Thyroid gland (tissue), 4 donors: ENCODE measurements at regions of chr10 and their contacts with region 1.

Region 1: DNA sequence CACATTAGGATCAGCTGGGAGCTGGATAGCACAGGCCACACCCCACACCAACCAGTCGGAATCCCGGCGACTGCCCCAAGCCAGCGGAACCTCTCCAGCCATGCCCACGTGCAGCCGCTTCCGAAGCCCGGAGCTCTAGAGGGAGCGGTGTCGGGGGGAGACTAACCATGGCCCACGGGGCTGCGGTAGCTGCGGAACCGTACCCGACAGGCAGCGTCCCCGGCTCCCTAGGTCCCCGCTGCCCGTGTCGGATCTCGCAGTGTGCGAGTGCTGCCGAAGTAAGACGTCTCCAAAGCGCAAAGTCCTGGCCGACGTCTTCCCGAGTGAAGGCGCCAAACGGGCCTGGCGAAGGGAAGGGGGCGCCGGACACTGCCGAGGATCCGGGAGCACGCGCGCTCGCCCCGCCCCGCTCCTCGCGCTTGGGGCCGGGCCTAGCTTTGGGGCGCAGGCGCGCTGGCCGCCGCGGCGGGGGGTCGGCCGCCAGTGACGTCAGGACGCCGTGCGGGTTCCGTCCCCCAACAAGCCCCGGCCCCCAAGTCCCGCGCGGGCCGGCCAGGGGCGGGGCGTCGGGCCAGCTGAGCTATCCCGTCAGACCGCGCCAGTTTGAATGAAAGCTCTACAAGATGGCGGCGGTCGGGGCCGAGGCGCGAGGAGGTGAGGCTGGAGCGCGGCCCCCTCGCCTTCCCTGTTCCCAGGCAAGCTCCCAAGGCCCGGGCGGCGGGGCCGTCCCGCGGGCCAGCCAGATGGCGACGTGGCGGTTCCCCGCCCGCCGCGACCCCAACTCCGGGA is at the start of gene SUV39H2:
- DNase-seq: peak; percentile 96 to 97
- H3K4me3 ChIP-seq: peak within 1 kb of the TSS; percentile 83 to 95 (median 93)
- H3K27ac ChIP-seq: peak within 1 kb of the TSS; percentile 93 to 94 (median 94)
- H3K4me1 ChIP-seq: peaks cover 9 to 16% of the 10 kb centered on the region in 2 donors
- H3K27me3 ChIP-seq: no peaks in the 10 kb centered on the region
- CTCF ChIP-seq: peak in 1 of 6 experiments; percentile 14
- POLR2A ChIP-seq: peak in 1 of 2 donors; percentile 89
- total RNA-seq, gene SUV39H2: 5.1 to 9.6 (median 8.7) TPM

Region 2: GRCh38 chr10:15092855-15093408 is 214.5 kb after region 1 on chr10:
- intact Hi-C with region 1: loop called (anchors 5 kb)
- DNase-seq: no peak
- H3K4me3 ChIP-seq: no peak overlapping the region
- H3K27ac ChIP-seq: no peak overlapping the region
- H3K4me1 ChIP-seq: peaks cover 1 to 6% of the 10 kb centered on the region in 2 donors
- H3K27me3 ChIP-seq: no peaks in the 10 kb centered on the region
- CTCF ChIP-seq: no peak
- POLR2A ChIP-seq: no peak

Region 3: DNA sequence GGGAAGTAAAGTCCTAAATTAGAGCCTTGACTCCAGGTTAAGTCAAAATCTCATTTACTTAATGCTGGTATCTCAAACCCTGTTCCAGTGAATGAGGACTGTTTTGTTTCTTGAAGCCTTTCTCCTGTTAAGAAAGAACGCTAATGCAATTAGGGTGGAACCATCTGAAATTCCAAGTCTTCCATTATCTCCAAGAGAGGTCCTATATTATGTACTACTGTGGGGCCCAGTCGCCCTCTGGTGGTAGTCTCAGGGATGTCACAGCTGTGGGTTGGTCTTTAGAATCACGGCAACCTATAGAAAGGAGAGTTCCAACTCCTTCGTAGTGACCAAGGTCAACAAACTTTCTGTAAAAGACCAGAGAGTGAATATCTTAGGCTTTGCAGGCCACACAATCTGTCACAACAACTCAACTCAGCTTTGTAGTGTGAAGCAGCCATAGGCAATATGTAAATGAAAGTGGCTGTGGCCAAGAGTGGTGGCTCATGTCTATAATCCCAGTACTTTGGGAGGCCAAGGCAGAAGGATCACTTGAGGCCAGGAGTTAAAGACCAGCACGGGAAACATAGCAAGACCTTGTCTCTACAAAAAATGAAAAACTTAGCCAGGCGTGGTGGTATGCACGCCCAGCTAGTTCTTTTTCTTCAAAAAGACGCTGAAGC is 228.0 kb after region 1 on chr10:
- intact Hi-C with region 1: no loop called
- DNase-seq: peak; percentile 69 to 74
- H3K4me3 ChIP-seq: no peak overlapping the region
- H3K27ac ChIP-seq: no peak overlapping the region
- H3K4me1 ChIP-seq: no peaks in the 10 kb centered on the region
- H3K27me3 ChIP-seq: no peaks in the 10 kb centered on the region
- CTCF ChIP-seq: peak; percentile 71 to 93 (median 82)
- POLR2A ChIP-seq: no peak